Dorsolateral prefrontal cortex (tissue), 120 donors: ENCODE measurements at regions of chrX and their contacts with region 1.

Region 1: GRCh38 chrX:50691820-50692219 is 122.2 kb downstream of the SHROOM4 start:
- DNase-seq: no peak
- H3K4me3 ChIP-seq: no peak overlapping the region
- H3K27ac ChIP-seq: no peak overlapping the region
- H3K27me3 ChIP-seq: peaks cover 0 to 77% (median 22%) of the 10 kb centered on the region in 45 donors
- CTCF ChIP-seq: peak; percentile 30 to 86 (median 72)

Region 2: DNA sequence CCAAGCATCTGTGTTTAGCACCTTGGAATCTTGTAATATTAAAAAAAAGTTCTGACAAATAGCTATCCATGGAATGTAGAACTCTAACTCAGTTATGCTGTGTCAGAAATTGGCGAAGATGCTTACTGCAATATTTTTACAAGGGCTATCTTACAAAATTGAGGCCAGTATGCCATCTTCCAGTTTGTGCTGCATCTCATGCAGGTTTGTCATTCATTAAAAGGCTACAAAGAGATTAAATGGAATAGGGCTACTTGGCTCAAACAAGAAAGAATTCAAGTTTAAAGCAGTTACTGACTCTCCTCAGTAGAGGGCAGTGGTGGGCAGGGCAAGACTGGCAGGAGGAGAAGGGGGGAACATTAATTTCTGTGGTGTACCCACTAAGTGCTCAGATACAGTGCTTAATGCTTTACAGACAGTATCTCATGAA is 55.7 kb after region 1 on chrX:
- intact Hi-C with region 1: loop called in 1 of 2 experiments (anchors 5 kb)
- DNase-seq: no peak
- H3K4me3 ChIP-seq: no peak overlapping the region
- H3K27ac ChIP-seq: peak overlapping the region in 9 of 59 donors; percentile 16 to 76 (median 68)
- H3K27me3 ChIP-seq: peaks cover 0 to 81% (median 27%) of the 10 kb centered on the region in 45 donors
- CTCF ChIP-seq: peak in 55 of 56 donors; percentile 45 to 81 (median 63)

Region 3: DNA sequence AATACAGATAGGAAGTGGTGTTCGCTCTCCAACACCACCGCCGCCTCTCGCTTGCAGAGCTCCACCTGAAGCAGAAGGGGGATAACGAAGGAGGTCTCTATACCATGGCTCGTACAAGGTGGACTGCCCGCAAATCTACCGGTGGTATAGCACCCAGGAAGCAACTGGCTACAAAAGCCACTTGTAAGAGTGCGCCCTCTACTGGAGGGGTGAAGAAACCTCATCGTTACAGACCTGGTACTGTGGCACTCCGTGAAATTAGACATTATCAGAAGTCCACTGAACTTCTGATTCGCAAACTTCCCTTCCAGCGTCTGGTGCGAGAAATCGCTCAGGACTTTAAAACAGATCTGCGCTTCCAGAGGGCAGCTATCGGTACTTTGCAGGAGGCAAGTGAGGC is 213.5 kb after region 1 on chrX:
- intact Hi-C with region 1: loop called (anchors 5 kb)
- DNase-seq: no peak
- H3K4me3 ChIP-seq: no peak overlapping the region
- H3K27ac ChIP-seq: no peak overlapping the region
- H3K27me3 ChIP-seq: peaks cover 0 to 91% (median 34%) of the 10 kb centered on the region in 45 donors
- CTCF ChIP-seq: peak in 10 of 56 donors; percentile 9 to 27 (median 20)

Region 4: GRCh38 chrX:51395810-51396728 is 704.2 kb after region 1 on chrX:
- intact Hi-C with region 1: no loop called
- DNase-seq: peak in 1 of 10 donors; percentile 32
- H3K4me3 ChIP-seq: peak overlapping the region; percentile 15 to 69 (median 54)
- H3K27ac ChIP-seq: peak overlapping the region in 12 of 59 donors; percentile 7 to 67 (median 44)
- H3K27me3 ChIP-seq: peaks cover 0 to 60% (median 13%) of the 10 kb centered on the region in 45 donors
- CTCF ChIP-seq: peak in 26 of 56 donors; percentile 1 to 41 (median 22)